Activated B cell treated with CpG ODN at 0.5 μM for 24 hours (primary cell): ENCODE measurements at regions of chr17 and their contacts with region 1.

Region 1: DNA sequence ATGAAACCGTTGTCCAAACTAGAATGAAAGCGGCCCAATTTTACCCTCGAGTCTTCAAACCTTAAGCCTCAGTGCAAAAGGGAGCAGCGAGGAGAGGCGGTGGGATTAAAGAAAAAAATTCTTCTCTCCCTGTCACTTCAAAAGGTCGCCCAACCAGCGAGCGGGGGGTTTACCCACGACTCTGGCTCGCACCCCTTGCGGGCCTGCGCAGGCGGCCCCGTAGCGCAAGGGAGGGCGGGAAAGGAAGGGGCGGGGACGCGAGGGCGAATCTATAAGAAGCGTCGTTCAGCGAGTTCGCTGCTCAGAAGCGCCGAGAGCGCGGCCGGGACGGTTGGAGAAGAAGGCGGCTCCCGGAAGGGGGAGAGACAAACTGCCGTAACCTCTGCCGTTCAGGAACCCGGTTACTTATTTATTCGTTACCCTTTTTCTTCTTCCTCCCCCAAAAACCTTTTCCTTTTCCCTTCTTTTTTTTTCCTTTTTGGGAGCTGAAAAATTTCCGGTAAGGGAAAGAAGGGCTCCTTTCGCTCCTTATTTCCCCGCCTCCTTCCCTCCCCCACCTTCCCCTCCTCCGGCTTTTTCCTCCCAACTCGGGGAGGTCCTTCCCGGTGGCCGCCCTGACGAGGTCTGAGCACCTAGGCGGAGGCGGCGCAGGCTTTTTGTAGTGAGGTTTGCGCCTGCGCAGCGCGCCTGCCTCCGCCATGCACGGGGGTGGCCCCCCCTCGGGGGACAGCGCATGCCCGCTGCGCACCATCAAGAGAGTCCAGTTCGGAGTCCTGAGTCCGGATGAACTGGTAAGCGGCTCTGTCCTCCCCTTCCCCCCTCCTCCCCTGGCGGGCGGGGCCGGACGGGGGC is at the start of gene POLR2A:
- DNase-seq: peak; percentile 99
- ATAC-seq: peak; percentile 66
- H3K4me3 Mint-ChIP-seq: peak within 1 kb of the TSS; percentile 98
- H3K27ac Mint-ChIP-seq: peak within 1 kb of the TSS; percentile 100
- H3K4me1 Mint-ChIP-seq: peaks cover 69% of the 10 kb centered on the region
- H3K27me3 Mint-ChIP-seq: no peaks in the 10 kb centered on the region
- CTCF ChIP-seq: no peak
- total RNA-seq, gene POLR2A: 148 and 162 TPM in 2 replicates

Region 2: GRCh38 chr17:7306911-7307686 is 177.2 kb before region 1 on chr17 and contains the start of gene EIF5A:
- CTCF ChIA-PET with region 1: no interaction called
- POLR2A ChIA-PET with region 1: interaction called, 7 read pairs
- intact Hi-C with region 1: loop called (anchors 1 kb)
- DNase-seq: peak; percentile 98
- ATAC-seq: peak; percentile 72
- H3K4me3 Mint-ChIP-seq: peak within 1 kb of the TSS; percentile 96
- H3K27ac Mint-ChIP-seq: peak within 1 kb of the TSS; percentile 99
- H3K4me1 Mint-ChIP-seq: peaks cover 38% of the 10 kb centered on the region
- H3K27me3 Mint-ChIP-seq: no peaks in the 10 kb centered on the region
- CTCF ChIP-seq: no peak
- total RNA-seq, gene EIF5A: 656 and 664 TPM in 2 replicates

Region 3: GRCh38 chr17:7383742-7384488 is 100.4 kb before region 1 on chr17:
- CTCF ChIA-PET with region 1: no interaction called
- POLR2A ChIA-PET with region 1: interaction called, 11 read pairs
- intact Hi-C with region 1: loop called (anchors 1 kb)
- DNase-seq: peak; percentile 82
- ATAC-seq: peak; percentile 98
- H3K4me3 Mint-ChIP-seq: peak overlapping the region; percentile 86
- H3K27ac Mint-ChIP-seq: peak overlapping the region; percentile 80
- H3K4me1 Mint-ChIP-seq: peaks cover 10% of the 10 kb centered on the region
- H3K27me3 Mint-ChIP-seq: peaks cover 29% of the 10 kb centered on the region
- CTCF ChIP-seq: no peak

Region 4: GRCh38 chr17:7428557-7428956 is 55.7 kb before region 1 on chr17 and contains the start of gene SPEM3:
- CTCF ChIA-PET with region 1: no interaction called
- POLR2A ChIA-PET with region 1: no interaction called
- intact Hi-C with region 1: no loop called
- DNase-seq: no peak
- ATAC-seq: no peak
- H3K4me3 Mint-ChIP-seq: no peak within 1 kb of the TSS
- H3K27ac Mint-ChIP-seq: no peak within 1 kb of the TSS
- H3K4me1 Mint-ChIP-seq: no peaks in the 10 kb centered on the region
- H3K27me3 Mint-ChIP-seq: peaks cover 5% of the 10 kb centered on the region
- CTCF ChIP-seq: no peak
- total RNA-seq, gene SPEM3: not detected in 2 replicates

Region 5: DNA sequence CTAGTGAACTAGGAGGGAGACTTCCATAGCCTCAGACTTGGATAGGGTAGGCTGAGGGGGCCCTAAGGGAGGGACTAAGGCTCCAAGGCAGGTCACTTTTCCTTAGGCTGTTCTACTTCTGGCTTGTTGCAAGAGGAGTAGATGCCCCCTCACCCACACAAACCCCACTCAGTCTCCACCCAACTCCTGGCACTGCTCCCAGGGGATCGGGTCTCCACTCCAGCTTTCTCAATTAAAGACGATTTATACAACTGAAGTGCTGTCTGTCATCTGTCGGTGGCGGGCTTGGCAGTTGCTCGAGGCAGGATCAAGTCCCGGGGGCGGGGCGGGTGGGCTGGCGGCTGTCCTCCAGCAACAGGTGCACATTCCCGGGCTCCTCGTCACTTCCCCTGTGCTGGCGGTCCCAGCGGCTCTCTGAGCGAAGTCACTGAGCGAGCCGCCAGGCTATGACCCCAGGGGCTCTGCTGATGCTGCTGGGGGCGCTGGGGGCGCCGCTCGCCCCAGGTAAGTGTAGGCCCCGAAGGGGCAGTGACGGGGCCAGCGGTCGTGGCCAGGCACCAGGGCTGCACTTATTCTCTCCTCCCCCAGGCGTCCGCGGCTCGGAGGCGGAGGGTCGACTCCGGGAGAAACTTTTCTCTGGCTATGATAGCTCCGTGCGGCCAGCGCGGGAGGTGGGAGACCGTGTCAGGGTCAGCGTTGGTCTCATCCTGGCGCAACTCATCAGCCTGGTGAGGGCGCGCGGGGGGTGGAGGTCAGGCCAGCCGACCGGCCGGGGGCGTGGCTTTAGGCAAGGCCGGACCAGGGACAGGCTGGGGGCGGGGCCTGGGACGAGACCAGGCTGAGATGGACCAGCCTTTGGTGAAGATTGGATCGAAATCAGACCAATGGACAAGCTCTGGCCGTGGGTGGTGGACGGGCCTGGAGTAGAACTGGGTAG is 39.3 kb before region 1 on chr17 and contains the start of gene CHRNB1:
- CTCF ChIA-PET with region 1: interaction called, 3 read pairs
- POLR2A ChIA-PET with region 1: interaction called, 30 read pairs
- intact Hi-C with region 1: no loop called
- DNase-seq: peak; percentile 23
- ATAC-seq: peak; percentile 32
- H3K4me3 Mint-ChIP-seq: peak within 1 kb of the TSS; percentile 78
- H3K27ac Mint-ChIP-seq: no peak within 1 kb of the TSS
- H3K4me1 Mint-ChIP-seq: peaks cover 35% of the 10 kb centered on the region
- H3K27me3 Mint-ChIP-seq: peaks cover 62% of the 10 kb centered on the region
- CTCF ChIP-seq: no peak
- total RNA-seq, gene CHRNB1: 5.9 and 6.0 TPM in 2 replicates

Region 6: DNA sequence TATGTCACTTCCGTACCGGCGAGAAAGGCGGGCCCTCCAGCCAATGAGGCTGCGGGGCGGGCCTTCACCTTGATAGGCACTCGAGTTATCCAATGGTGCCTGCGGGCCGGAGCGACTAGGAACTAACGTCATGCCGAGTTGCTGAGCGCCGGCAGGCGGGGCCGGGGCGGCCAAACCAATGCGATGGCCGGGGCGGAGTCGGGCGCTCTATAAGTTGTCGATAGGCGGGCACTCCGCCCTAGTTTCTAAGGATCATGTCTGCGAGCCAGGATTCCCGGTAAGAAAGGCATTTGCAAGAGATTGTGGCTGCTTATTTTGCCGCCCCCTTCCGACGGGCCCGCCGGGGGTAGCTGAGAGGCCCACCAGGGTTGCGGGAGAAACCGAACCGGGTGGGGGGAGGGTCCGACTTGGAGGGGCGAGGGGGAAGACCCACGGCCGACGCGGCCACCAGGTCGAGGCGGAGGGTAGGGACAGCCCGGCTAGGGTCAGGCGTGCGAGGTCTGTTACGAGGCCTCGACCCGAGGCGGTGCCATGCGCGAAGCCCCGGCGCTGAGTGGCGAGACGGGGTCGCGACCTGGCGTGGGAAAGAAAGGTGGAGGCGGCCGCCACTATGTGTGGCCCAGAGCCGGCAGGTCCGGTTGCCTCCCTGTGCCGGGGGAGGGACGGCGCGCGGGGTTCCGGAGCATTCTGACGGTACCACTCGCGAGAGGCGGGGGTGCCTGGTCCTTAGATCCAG is 88.5 kb after region 1 on chr17:
- CTCF ChIA-PET with region 1: no interaction called
- POLR2A ChIA-PET with region 1: interaction called, 10 read pairs
- intact Hi-C with region 1: loop called (anchors 1 kb)
- DNase-seq: peak; percentile 100
- ATAC-seq: no peak
- H3K4me3 Mint-ChIP-seq: peak overlapping the region; percentile 98
- H3K27ac Mint-ChIP-seq: peak overlapping the region; percentile 99
- H3K4me1 Mint-ChIP-seq: peaks cover 48% of the 10 kb centered on the region
- H3K27me3 Mint-ChIP-seq: no peaks in the 10 kb centered on the region
- CTCF ChIP-seq: no peak

Region 7: GRCh38 chr17:7673239-7673638 is 188.9 kb after region 1 on chr17:
- CTCF ChIA-PET with region 1: no interaction called
- POLR2A ChIA-PET with region 1: no interaction called
- intact Hi-C with region 1: no loop called
- DNase-seq: no peak
- ATAC-seq: no peak
- H3K4me3 Mint-ChIP-seq: no peak overlapping the region
- H3K27ac Mint-ChIP-seq: no peak overlapping the region
- H3K4me1 Mint-ChIP-seq: peaks cover 7% of the 10 kb centered on the region
- H3K27me3 Mint-ChIP-seq: no peaks in the 10 kb centered on the region
- CTCF ChIP-seq: no peak